Tibial artery (tissue), 4 donors: ENCODE measurements at regions of chr1 and their contacts with region 1.

Region 1: DNA sequence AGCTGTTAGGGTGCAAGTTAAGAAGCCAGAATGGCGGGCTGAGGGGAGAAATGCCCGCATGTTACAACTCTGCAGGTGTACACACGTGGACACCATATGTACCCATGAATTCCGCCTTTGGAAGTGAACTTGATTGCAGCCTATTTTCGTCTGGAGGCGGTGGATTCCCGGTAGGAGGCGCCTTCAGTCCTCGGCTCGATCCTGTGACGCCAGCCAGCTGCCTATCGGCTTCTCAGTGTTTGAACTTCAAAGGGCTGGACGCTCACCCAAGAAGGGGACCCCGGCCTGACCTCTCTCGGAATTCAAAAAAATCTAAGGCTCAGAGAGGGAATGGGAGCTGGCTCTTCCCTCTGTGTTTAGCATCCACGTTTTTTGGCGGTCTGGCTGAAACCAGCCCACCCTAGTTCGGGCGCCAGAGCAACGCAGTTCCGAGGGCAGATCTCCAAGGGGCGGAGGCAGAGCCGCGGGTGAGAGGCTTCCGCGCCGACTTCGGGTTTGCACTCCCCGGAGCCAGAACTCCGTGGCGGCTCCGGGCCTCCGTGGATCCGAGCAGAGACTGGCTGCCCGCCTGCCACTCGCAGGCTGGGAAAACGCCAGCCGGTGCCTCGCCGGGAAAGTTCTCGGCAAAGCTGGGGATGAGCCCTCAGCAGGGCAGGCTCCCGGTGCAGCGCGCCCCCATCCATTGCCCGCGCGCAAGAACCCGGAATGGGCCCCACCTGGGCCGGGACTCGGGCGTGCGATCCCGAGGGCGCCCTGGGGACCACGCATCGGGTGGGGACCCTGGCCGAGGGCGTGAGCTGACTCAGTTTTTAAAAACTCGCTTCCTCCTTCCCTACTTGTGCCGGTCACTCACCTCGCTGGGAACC is 996 bp upstream of the TMEM51 start:
- DNase-seq: peak; percentile 77 to 87
- H3K4me3 ChIP-seq: peak overlapping the region; percentile 87 to 91
- H3K27ac ChIP-seq: peak overlapping the region; percentile 66 to 84
- H3K4me1 ChIP-seq: peaks cover 0 to 40% (median 20%) of the 10 kb centered on the region in 4 donors
- H3K27me3 ChIP-seq: no peaks in the 10 kb centered on the region
- CTCF ChIP-seq: peak; percentile 68 to 71

Region 2: DNA sequence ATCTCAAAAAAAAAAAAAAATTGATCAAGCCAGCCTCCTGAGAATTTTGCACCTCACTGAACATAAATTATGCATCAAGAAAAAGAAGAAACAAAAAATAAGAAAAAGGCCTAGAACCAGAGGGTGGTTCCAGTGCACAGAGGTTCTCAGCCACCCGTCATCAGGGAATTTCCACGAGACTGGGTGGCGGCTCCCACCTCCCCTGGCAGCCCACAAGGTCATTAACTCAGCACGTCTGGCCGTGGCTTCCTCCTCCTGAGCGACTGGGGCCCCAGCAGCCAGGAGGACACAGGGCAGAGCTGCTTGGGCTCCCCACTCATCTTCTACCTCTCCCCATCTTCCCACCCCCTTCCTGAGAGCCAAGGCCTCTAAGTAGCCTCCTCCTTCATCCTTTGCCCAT is 14.7 kb before region 1 on chr1:
- intact Hi-C with region 1: no loop called
- DNase-seq: no peak
- H3K4me3 ChIP-seq: no peak overlapping the region
- H3K27ac ChIP-seq: no peak overlapping the region
- H3K4me1 ChIP-seq: no peaks in the 10 kb centered on the region
- H3K27me3 ChIP-seq: peaks cover 0 to 9% of the 10 kb centered on the region in 2 donors
- CTCF ChIP-seq: no peak

Region 3: DNA sequence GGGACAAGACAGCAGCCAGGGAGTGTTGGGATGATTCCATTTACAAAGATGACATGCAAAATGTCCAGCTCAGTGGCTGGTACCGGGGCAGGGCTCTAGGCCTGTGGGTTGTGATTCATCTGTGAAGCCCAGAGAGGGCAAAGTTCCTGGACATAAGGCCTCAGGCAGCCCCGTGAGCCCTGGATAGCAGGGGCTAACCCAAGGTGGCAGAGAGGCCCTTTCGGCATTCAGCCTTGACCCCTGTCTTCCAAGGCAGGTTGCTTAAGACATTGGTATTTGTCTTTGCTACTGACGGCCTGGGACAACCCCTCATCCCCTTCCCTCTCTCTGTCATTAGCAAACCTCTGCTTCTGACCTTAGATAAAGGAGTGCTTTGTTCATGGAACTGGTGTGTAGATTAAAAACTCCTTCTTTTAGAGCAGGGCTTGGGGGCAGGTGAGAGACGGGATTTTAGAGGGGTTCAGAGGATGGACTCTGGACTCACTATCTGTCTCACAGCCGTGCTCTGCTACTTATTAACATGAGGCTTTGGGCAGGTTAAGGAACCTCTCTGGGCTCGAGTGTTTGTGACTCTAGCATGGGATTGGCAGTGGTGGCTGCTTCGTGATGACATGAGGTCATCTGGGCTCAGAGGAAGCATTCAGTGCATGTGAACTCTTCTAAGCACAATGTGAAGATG is 37.3 kb after region 1 on chr1:
- intact Hi-C with region 1: loop called (anchors 5 kb)
- DNase-seq: no peak
- H3K4me3 ChIP-seq: no peak overlapping the region
- H3K27ac ChIP-seq: no peak overlapping the region
- H3K4me1 ChIP-seq: peaks cover 0 to 15% (median 1%) of the 10 kb centered on the region in 4 donors
- H3K27me3 ChIP-seq: no peaks in the 10 kb centered on the region
- CTCF ChIP-seq: no peak

Region 4: GRCh38 chr1:15272009-15272788 is 119.6 kb after region 1 on chr1:
- intact Hi-C with region 1: loop called (anchors 1 kb)
- DNase-seq: peak; percentile 48 to 73
- H3K4me3 ChIP-seq: no peak overlapping the region
- H3K27ac ChIP-seq: no peak overlapping the region
- H3K4me1 ChIP-seq: peaks cover 0 to 6% (median 0%) of the 10 kb centered on the region in 4 donors
- H3K27me3 ChIP-seq: peaks cover 0 to 14% of the 10 kb centered on the region in 2 donors
- CTCF ChIP-seq: peak; percentile 82 to 84